ENCODE measurements at regions of chr16 and their contacts with region 1.

Region 1: GRCh38 chr16:67806428-67807147 is at the starts of genes RANBP10 and TSNAXIP1:
- DNase-seq: peak; percentile 96
- H3K4me3 Mint-ChIP-seq: peak within 1 kb of the TSS; percentile 90
- H3K27ac Mint-ChIP-seq: peak within 1 kb of the TSS; percentile 86
- H3K4me1 Mint-ChIP-seq: peaks cover 35% of the 10 kb centered on the region
- H3K27me3 Mint-ChIP-seq: peaks cover 3% of the 10 kb centered on the region
- total RNA-seq, gene RANBP10: 23.0 and 25.7 TPM in 2 replicates
- total RNA-seq, gene TSNAXIP1: 0.52 and 0.83 TPM in 2 replicates

Region 2: GRCh38 chr16:67226804-67227557 is 579.6 kb before region 1 on chr16 and contains the start of gene TMEM208:
- intact Hi-C with region 1: loop called (anchors 1 kb)
- DNase-seq: peak; percentile 99
- H3K4me3 Mint-ChIP-seq: peak within 1 kb of the TSS; percentile 98
- H3K27ac Mint-ChIP-seq: peak within 1 kb of the TSS; percentile 94
- H3K4me1 Mint-ChIP-seq: peaks cover 43% of the 10 kb centered on the region
- H3K27me3 Mint-ChIP-seq: no peaks in the 10 kb centered on the region
- total RNA-seq, gene TMEM208: 68.5 and 72.4 TPM in 2 replicates

Region 3: GRCh38 chr16:67719048-67719777 is 87.4 kb before region 1 on chr16 and contains the start of gene GFOD2:
- intact Hi-C with region 1: loop called (anchors 1 kb)
- DNase-seq: peak; percentile 97
- H3K4me3 Mint-ChIP-seq: peak within 1 kb of the TSS; percentile 96
- H3K27ac Mint-ChIP-seq: peak within 1 kb of the TSS; percentile 94
- H3K4me1 Mint-ChIP-seq: peaks cover 33% of the 10 kb centered on the region
- H3K27me3 Mint-ChIP-seq: no peaks in the 10 kb centered on the region
- total RNA-seq, gene GFOD2: 19.6 and 20.3 TPM in 2 replicates

Region 4: DNA sequence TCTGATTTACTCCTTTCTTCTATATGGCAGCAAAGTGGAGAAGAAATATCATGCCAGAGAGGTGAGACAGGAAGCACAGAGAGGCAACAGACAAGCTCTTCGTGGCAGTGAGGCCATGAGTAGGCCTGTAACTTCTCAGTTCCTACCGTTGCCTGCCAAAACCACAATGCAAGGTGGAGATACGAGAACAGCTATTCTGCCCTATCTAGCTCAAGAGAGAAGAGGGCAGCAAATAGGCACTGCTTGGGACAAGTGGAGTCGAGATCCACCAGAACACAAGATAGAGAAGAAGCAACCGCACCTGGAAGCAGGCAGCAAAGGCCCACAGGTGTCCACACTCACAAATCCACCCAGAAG is 25.0 kb before region 1 on chr16:
- intact Hi-C with region 1: no loop called
- DNase-seq: no peak
- H3K4me3 Mint-ChIP-seq: no peak overlapping the region
- H3K27ac Mint-ChIP-seq: peak overlapping the region; percentile 77
- H3K4me1 Mint-ChIP-seq: peaks cover 27% of the 10 kb centered on the region
- H3K27me3 Mint-ChIP-seq: no peaks in the 10 kb centered on the region

Region 5: GRCh38 chr16:67872786-67873537 is 66.4 kb after region 1 on chr16 and contains the start of gene EDC4:
- intact Hi-C with region 1: loop called (anchors 2 kb)
- DNase-seq: peak; percentile 89
- H3K4me3 Mint-ChIP-seq: peak within 1 kb of the TSS; percentile 88
- H3K27ac Mint-ChIP-seq: peak within 1 kb of the TSS; percentile 81
- H3K4me1 Mint-ChIP-seq: peaks cover 35% of the 10 kb centered on the region
- H3K27me3 Mint-ChIP-seq: no peaks in the 10 kb centered on the region
- total RNA-seq, gene EDC4: 115 and 128 TPM in 2 replicates